ENCODE measurements at regions of chr6 and their contacts with region 1.

Region 1: GRCh38 chr6:156776840-156777576 is at the start of gene ARID1B:
- DNase-seq: peak; percentile 94
- H3K4me3 ChIP-seq: peak within 1 kb of the TSS; percentile 80
- H3K27ac ChIP-seq: peak within 1 kb of the TSS; percentile 97
- H3K4me1 ChIP-seq: peaks cover 36% of the 10 kb centered on the region
- CTCF ChIP-seq: no peak
- total RNA-seq, gene ARID1B: 71.8 and 90.1 TPM in 2 replicates

Region 2: DNA sequence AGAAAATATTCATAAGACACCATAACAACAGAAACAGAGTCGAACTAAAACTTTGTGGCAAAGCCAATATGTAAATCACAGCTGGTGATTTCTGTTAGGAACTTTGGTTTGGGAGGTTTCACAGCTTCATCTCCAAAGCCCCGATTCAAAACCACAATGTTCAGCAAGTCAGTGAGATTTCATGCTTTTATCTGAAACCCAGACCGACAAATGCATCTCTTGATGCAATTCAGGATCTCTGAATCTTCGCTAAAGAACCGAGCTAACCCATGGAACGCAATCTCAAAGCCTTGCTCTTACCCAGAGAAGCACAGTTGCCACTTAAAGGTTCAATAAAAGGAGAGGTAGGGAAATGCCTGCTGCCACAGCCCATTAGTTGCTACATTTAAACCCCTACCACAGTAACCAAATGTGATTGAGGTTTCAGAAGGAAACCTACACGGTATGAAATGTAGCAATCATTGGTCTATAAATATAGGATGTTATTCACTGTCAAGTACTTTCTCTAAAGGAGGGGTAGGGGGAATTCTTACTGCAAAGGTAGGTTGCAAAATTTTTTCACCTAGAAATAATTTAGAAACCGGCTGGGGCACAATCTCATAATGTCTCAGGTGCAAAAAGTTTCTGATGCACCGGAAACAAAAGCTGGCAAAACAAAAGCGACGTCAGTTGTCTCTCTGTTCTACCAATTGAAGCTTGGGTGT is 380.8 kb before region 1 on chr6:
- CTCF ChIA-PET with region 1: no interaction called
- POLR2A ChIA-PET with region 1: no interaction called
- intact Hi-C with region 1: loop called (anchors 1 kb)
- DNase-seq: peak; percentile 89
- H3K4me3 ChIP-seq: peak overlapping the region; percentile 70
- H3K27ac ChIP-seq: peak overlapping the region; percentile 99
- H3K4me1 ChIP-seq: peaks cover 82% of the 10 kb centered on the region
- CTCF ChIP-seq: no peak

Region 3: DNA sequence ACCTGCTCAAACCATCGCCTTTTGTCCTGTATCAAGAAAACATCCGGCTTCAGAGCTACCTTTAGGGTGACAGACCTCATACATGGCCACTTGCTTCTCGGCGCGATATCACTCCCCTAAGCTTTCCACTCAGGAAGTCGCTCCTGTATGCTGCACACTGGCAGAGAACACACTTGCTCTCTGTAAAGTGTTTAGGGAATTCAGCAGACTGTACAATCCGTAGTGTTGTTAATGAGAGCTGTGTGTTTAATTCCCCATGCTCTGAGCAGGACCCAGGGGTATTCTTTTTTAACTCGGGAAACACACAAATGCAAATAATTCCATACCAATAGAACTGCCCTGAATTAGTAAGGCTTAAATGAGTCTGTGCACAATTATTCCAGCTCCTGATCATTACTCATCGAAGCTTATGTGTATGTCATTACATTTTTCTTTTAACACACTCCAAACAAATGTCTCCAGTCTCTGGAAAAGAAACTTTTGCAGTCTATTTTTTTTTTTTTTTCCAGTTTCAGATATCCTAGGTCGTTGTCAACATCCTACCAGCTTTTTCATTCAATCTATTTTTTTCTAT is 338.6 kb before region 1 on chr6:
- CTCF ChIA-PET with region 1: no interaction called
- POLR2A ChIA-PET with region 1: no interaction called
- intact Hi-C with region 1: no loop called
- DNase-seq: no peak
- H3K4me3 ChIP-seq: no peak overlapping the region
- H3K27ac ChIP-seq: no peak overlapping the region
- H3K4me1 ChIP-seq: no peaks in the 10 kb centered on the region
- CTCF ChIP-seq: no peak

Region 4: DNA sequence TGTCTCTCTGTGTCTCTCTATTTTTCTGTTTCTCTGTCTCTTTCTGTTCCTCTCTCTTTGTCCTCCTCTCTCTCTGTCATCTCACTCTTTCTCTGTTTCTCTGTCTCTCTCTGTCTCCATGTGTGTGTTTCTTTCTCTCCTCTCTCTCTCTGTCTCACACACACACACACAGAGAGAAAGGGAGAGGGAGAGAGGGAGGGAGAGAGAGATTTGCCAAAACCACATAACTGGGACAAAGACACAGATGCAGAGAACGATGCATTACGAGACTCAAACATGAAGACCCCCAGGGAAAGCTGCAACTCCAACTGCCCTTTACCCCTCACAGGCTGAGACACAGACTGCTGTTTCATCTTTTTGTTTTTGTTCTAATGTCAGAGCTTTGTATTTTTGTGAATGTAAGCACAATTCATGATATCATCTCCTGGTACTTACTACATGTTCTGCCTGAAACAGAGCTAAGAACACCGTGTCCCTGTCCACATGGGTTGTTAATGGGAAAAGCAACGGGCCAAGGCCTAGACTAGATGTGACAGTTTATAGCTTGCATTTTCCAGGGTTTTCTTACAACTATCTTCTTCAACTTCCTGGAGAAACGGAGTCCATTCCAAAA is 176.9 kb before region 1 on chr6:
- CTCF ChIA-PET with region 1: no interaction called
- POLR2A ChIA-PET with region 1: no interaction called
- intact Hi-C with region 1: no loop called
- DNase-seq: no peak
- H3K4me3 ChIP-seq: no peak overlapping the region
- H3K27ac ChIP-seq: no peak overlapping the region
- H3K4me1 ChIP-seq: no peaks in the 10 kb centered on the region
- CTCF ChIP-seq: no peak

Region 5: GRCh38 chr6:156634951-156635371 is 142.0 kb before region 1 on chr6:
- CTCF ChIA-PET with region 1: no interaction called
- POLR2A ChIA-PET with region 1: interaction called, 5 read pairs
- intact Hi-C with region 1: loop called (anchors 1 kb)
- DNase-seq: peak; percentile 25
- H3K4me3 ChIP-seq: no peak overlapping the region
- H3K27ac ChIP-seq: peak overlapping the region; percentile 90
- H3K4me1 ChIP-seq: peaks cover 51% of the 10 kb centered on the region
- CTCF ChIP-seq: no peak

Region 6: DNA sequence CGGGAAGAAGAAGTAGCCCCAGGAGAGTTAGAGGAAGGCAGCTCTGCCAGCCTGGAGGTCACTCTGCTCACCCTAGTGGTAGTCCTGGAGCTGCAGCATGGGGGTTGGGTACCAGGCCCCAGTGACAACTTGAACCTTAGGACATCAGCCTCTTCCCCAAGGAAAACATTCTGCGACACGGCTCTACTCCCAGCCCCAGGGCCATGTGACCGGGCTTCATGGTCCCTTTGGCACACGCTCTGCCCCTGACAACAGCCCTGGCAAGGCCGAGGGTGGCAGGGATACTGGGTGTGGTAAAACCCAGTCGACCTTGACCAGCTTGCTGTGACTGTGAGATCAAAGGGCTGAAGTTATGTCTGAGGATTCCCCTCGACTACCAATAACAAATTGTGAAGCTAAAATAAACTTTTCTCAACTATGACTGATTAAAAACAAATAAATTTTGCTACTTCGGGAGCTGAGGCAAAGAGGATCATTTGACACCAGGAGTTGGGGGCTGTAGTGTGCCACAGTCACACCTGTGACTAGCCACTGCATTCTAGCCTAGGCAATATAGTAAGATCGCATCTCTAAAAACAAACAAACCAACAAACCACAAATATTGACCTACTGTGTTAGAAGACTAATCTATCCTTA is 24.2 kb before region 1 on chr6:
- CTCF ChIA-PET with region 1: no interaction called
- POLR2A ChIA-PET with region 1: interaction called, 21 read pairs
- intact Hi-C with region 1: loop called (anchors 2 kb)
- DNase-seq: peak; percentile 78
- H3K4me3 ChIP-seq: peak overlapping the region; percentile 43
- H3K27ac ChIP-seq: peak overlapping the region; percentile 77
- H3K4me1 ChIP-seq: peaks cover 68% of the 10 kb centered on the region
- CTCF ChIP-seq: peak; percentile 82

Region 7: DNA sequence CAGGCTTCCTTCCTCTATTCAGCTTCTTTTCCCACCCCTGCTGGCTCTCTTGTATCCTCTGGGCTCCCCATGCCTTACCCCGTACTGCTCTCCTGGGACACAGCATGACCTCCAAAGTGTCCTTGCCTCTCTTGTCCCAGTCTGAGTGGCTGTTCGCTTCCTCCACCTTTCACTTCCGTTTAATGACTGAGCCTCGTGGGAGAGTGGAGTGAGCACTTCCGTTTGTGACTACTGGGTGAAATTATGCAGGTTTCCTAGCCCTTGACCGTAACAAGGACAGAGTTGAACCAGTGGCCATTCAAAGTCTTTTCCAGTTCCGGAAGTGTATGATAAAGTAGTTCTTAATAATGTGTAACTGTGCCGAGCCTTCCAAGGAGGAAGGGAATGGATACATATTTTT is 109.4 kb after region 1 on chr6:
- CTCF ChIA-PET with region 1: no interaction called
- POLR2A ChIA-PET with region 1: interaction called, 3 read pairs
- intact Hi-C with region 1: loop called (anchors 10 kb)
- DNase-seq: peak; percentile 60
- H3K4me3 ChIP-seq: peak overlapping the region; percentile 32
- H3K27ac ChIP-seq: no peak overlapping the region
- H3K4me1 ChIP-seq: peaks cover 54% of the 10 kb centered on the region
- CTCF ChIP-seq: no peak

Region 8: GRCh38 chr6:157021344-157021992 is 244.5 kb after region 1 on chr6:
- CTCF ChIA-PET with region 1: no interaction called
- POLR2A ChIA-PET with region 1: no interaction called
- intact Hi-C with region 1: loop called (anchors 1 kb)
- DNase-seq: peak; percentile 93
- H3K4me3 ChIP-seq: peak overlapping the region; percentile 73
- H3K27ac ChIP-seq: peak overlapping the region; percentile 89
- H3K4me1 ChIP-seq: peaks cover 38% of the 10 kb centered on the region
- CTCF ChIP-seq: peak; percentile 38

Measured in OCI-LY7 (cell line).